ENCODE measurements at regions of chr5 and their contacts with region 1.

Region 1: GRCh38 chr5:171893290-171893886 is 107.8 kb downstream of the SMIM23 start:
- DNase-seq: no peak
- ATAC-seq: no peak
- H3K4me3 ChIP-seq: no peak overlapping the region
- H3K27ac ChIP-seq: no peak overlapping the region
- H3K4me1 ChIP-seq: 0 out of 2 replicates have a peak, but pooled peaks cover 4% of the 10 kb centered on the region
- H3K27me3 ChIP-seq: no peaks in the 10 kb centered on the region
- CTCF ChIP-seq: no peak

Region 2: DNA sequence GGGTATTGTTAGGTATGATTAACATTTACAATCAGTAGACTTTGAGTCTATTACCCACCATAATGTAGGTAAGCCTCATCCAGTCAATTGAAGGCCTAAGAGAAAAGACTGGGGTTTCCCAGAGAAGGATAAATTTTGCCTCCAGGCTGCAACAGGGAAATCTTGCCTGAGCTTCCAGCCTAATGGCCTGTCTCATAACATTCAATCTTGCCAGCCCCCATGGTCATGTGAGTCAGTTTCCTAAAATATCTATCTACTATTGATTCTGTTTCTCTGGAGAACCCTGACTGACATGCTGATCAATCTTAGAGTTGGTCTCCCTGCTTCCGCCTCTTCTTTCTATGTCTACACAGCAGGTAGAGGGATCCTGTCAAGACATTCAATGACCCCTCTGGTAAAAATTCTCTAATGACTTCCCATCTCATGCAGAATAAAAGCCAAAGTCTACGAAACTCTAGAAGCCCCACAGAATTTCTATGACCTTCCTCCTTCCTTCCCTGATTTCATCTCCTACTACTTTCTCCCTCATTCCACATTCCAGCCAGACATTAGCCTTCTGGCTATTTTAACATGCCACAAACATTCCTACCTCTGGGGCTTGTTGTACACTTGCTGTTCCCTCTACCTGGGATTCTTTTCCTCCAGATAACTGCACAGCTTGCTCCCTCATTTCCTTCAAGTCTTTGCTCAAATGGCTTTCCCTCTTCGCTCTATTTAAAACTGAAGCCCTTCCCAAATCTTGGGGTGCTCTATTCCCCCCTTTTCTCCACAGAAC is 52.8 kb after region 1 on chr5:
- CTCF ChIA-PET with region 1: no interaction called
- POLR2A ChIA-PET with region 1: no interaction called
- intact Hi-C with region 1: no loop called
- DNase-seq: peak; percentile 25
- ATAC-seq: no peak
- H3K4me3 ChIP-seq: no peak overlapping the region
- H3K27ac ChIP-seq: no peak overlapping the region
- H3K4me1 ChIP-seq: no peaks in the 10 kb centered on the region
- H3K27me3 ChIP-seq: no peaks in the 10 kb centered on the region
- CTCF ChIP-seq: no peak

Region 3: DNA sequence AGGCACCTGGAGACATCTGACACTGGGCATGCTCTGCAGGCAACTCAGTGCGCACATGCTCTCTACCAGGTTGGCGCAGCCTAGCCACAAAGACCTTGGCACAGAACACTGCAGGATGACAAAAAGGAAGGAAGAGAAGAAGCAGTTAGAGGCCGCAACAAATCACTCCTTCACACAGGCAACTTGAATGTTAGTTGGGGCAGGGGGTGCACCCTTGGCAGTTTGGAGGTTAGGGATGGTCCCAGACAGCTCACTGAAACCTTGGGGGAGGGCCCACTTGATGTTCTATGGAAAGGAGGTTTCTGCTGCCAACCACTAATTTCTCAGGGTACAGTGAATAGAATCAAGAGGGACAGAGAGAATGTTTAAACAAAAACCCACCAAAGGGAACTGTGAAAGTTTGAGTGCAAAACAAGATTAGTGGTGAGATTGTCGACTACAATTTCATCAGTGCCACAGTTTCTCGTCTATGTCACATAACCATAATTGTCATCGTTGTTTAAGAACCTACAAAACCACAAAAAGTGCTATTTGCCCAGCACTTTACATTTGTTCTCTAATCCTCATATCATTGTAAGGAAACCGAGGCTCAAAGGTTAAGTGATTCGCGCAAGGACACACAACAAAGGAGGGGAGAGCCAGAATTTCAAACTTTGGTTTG is 64.3 kb after region 1 on chr5:
- CTCF ChIA-PET with region 1: no interaction called
- POLR2A ChIA-PET with region 1: interaction called, 15 read pairs
- intact Hi-C with region 1: no loop called
- DNase-seq: no peak
- ATAC-seq: no peak
- H3K4me3 ChIP-seq: no peak overlapping the region
- H3K27ac ChIP-seq: no peak overlapping the region
- H3K4me1 ChIP-seq: peaks cover 49% of the 10 kb centered on the region
- H3K27me3 ChIP-seq: no peaks in the 10 kb centered on the region
- CTCF ChIP-seq: no peak

Region 4: GRCh38 chr5:171989276-171989675 is 95.9 kb after region 1 on chr5:
- CTCF ChIA-PET with region 1: no interaction called
- POLR2A ChIA-PET with region 1: no interaction called
- intact Hi-C with region 1: no loop called
- DNase-seq: peak; percentile 87
- ATAC-seq: peak; percentile 61
- H3K4me3 ChIP-seq: peak overlapping the region; percentile 25; the same call in 1 of the 2 replicates
- H3K27ac ChIP-seq: peak overlapping the region; percentile 82
- H3K4me1 ChIP-seq: peaks cover 44% of the 10 kb centered on the region
- H3K27me3 ChIP-seq: no peaks in the 10 kb centered on the region
- CTCF ChIP-seq: no peak

Region 5: GRCh38 chr5:172274921-172275753 is 381.7 kb after region 1 on chr5:
- CTCF ChIA-PET with region 1: no interaction called
- POLR2A ChIA-PET with region 1: no interaction called
- intact Hi-C with region 1: no loop called
- DNase-seq: no peak
- ATAC-seq: no peak
- H3K4me3 ChIP-seq: no peak overlapping the region
- H3K27ac ChIP-seq: no peak overlapping the region
- H3K4me1 ChIP-seq: peaks cover 23% of the 10 kb centered on the region
- H3K27me3 ChIP-seq: no peaks in the 10 kb centered on the region
- CTCF ChIP-seq: no peak

Measured in PC-3 (cell line).